Activated CD4-positive, alpha-beta T cell treated with anti-CD3 and anti-CD28 coated beads for 36 hours (primary cell): ENCODE measurements at regions of chr19 and their contacts with region 1.

Region 1: DNA sequence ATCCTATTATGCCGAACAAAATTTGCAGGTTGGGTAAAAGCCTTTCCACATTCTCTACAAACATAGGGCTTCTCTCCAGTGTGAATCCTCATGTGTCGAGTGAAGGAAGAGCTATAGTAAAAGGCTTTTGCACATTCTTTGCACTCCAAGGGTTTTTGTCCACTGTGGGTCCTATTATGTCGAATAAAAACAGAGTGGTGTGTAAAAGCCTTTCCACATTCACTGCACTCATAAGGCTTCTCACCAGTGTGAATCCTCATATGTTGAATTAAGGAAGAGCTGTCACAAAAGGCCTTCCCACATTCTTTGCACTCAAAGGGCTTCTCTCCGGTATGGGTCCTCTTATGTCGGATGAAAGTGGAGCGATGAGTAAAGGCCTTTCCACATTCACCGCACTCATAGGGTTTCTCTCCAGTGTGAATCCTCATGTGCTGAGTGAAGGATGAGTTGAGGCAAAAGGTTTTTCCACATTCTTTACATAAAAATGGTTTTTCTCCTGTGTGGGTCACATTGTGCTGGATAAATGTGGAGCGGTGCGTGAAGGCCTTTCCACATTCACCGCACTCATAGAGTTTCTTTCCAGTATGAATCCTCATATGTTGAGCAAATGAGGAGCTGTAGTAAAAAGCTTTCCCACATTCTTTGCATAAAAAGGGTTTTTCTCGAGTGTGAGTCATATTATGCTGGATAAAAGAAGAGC is 13.6 kb downstream of the ZNF599 start:
- DNase-seq: no peak
- ATAC-seq: no peak
- H3K4me3 Mint-ChIP-seq: no peak overlapping the region
- H3K27ac Mint-ChIP-seq: no peak overlapping the region
- H3K4me1 Mint-ChIP-seq: no peaks in the 10 kb centered on the region
- H3K27me3 Mint-ChIP-seq: no peaks in the 10 kb centered on the region

Region 2: GRCh38 chr19:34943861-34944573 is 184.6 kb after region 1 on chr19:
- CTCF ChIA-PET with region 1: no interaction called
- POLR2A ChIA-PET with region 1: no interaction called
- intact Hi-C with region 1: loop called in 1 of 2 experiments (anchors 10 kb)
- DNase-seq: no peak
- ATAC-seq: no peak
- H3K4me3 Mint-ChIP-seq: no peak overlapping the region
- H3K27ac Mint-ChIP-seq: no peak overlapping the region
- H3K4me1 Mint-ChIP-seq: no peaks in the 10 kb centered on the region
- H3K27me3 Mint-ChIP-seq: no peaks in the 10 kb centered on the region

Region 3: DNA sequence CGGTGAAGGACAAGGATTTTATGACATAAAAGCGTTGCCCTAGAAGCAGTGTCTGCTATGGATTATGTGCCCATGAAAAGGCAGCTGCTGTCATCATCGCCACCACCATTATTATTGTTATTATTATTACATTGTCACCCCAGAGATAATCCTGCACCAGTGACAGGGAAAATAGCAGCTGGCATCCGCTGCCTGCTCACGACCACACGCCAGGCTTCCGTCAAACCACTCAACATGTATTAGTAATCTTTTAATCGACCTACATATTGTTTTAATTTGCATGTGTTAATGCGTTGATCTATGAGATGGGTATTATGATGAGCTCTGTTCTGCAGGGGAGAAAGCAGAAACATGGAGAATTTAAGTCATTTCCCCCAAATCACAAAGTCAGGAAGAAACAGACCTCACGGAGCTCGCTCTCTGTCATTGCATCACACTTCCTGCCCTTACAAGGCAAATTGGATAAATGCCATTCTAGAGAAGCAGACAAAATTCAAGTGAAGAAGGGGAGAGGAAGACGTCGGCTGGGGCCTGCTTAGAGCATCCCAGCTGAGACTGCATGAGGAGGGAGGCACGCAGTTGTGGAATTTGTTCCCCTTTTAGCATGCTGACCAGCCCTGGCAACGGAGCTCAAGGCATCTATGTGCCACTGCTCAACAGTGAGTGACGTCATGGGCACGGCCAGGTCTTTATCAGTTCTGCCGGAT is 598.7 kb after region 1 on chr19 and contains the start of gene FFAR3:
- CTCF ChIA-PET with region 1: no interaction called
- POLR2A ChIA-PET with region 1: no interaction called
- intact Hi-C with region 1: no loop called
- DNase-seq: peak; percentile 29
- ATAC-seq: peak; percentile 53
- H3K4me3 Mint-ChIP-seq: peak within 1 kb of the TSS; percentile 50
- H3K27ac Mint-ChIP-seq: peak within 1 kb of the TSS; percentile 82
- H3K4me1 Mint-ChIP-seq: peaks cover 13% of the 10 kb centered on the region
- H3K27me3 Mint-ChIP-seq: peaks cover 10% of the 10 kb centered on the region
- total RNA-seq, gene FFAR3: 2.4 to 3.1 TPM